IMR-90 (cell line): ENCODE measurements at regions of chr15 and their contacts with region 1.

Region 1: DNA sequence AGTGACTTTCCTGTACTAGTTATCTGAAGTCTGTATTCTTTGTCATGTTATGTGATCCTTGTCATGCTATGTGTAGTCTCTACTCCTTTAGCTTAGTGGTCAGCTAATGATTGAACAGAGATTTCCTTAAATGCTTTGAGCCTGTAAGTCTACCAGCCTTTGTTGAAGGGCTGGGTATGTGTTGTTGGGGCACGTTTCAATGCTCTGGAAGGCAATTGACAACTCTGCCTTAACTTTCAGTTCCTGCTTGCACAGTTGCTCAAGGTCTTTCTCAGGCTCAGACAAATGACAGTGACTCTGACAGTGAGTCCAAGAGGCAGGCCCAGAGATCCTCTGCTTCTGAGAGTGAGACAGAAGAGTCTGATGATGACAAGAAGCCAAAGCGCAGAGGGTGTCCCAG is 89.3 kb downstream of the CHD2 start:
- DNase-seq: no peak
- ATAC-seq: no peak
- H3K4me3 ChIP-seq: no peak overlapping the region
- H3K27ac ChIP-seq: no peak overlapping the region
- H3K4me1 ChIP-seq: no peaks in the 10 kb centered on the region
- H3K27me3 ChIP-seq: no peaks in the 10 kb centered on the region
- CTCF ChIP-seq: no peak
- POLR2A ChIP-seq: no peak
- RAD21 ChIP-seq: no peak

Region 2: DNA sequence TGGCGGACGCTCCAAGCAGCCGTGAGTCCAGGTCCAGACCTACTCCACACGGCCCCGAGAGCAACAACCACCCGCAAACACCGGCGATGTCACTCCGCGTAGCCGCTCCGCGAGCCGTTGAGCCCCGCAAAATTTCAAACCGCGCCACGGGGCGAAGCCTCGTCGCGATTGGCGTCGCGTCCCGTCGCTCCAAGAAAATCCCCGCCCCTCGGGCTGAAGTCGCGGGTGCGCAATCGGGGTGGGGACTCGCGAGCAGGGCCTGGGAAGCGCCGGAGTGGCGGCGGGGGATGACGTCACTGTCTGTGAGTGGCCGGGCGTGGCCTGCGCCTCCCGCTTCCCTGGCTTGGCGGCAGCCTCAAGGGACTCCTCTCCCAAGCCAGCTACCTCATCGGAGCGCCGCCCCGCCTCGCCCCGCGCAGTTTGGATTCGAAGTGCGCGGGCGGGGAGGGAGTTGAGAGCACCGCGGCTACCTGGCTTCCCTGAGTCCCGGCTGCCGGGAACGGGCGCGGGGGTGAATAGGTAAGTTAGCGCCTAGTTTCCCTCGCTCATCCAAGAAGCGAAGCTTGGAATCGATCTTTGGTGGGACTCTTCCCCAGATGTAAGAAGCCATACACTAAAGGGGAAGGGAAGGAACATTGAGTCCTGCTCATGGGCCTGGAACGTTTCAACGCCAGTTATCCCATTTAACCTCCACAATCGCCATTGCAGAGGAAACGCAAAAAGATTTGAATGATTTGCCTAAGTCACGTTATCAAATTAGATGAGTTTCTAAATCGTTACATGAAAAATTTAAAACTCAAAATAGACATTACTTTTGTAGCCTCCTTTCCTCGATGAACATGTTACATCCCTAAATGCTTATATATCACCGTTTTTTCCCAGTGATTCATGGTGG is 1994.8 kb before region 1 on chr15 and contains the start of gene PRC1:
- CTCF ChIA-PET with region 1: no interaction called
- POLR2A ChIA-PET with region 1: no interaction called
- dilution Hi-C with region 1: no loop called
- in situ Hi-C with region 1: loop called (anchors 25 kb)
- intact Hi-C with region 1: no loop called
- DNase-seq: peak; percentile 97
- ATAC-seq: peak; percentile 98
- H3K4me3 ChIP-seq: peak within 1 kb of the TSS; percentile 96
- H3K27ac ChIP-seq: peak within 1 kb of the TSS; percentile 72
- H3K4me1 ChIP-seq: no peaks in the 10 kb centered on the region
- H3K27me3 ChIP-seq: no peaks in the 10 kb centered on the region
- CTCF ChIP-seq: no peak
- POLR2A ChIP-seq: peak; percentile 83
- RAD21 ChIP-seq: no peak
- total RNA-seq, gene PRC1: 148 and 208 TPM in 2 replicates

Region 3: DNA sequence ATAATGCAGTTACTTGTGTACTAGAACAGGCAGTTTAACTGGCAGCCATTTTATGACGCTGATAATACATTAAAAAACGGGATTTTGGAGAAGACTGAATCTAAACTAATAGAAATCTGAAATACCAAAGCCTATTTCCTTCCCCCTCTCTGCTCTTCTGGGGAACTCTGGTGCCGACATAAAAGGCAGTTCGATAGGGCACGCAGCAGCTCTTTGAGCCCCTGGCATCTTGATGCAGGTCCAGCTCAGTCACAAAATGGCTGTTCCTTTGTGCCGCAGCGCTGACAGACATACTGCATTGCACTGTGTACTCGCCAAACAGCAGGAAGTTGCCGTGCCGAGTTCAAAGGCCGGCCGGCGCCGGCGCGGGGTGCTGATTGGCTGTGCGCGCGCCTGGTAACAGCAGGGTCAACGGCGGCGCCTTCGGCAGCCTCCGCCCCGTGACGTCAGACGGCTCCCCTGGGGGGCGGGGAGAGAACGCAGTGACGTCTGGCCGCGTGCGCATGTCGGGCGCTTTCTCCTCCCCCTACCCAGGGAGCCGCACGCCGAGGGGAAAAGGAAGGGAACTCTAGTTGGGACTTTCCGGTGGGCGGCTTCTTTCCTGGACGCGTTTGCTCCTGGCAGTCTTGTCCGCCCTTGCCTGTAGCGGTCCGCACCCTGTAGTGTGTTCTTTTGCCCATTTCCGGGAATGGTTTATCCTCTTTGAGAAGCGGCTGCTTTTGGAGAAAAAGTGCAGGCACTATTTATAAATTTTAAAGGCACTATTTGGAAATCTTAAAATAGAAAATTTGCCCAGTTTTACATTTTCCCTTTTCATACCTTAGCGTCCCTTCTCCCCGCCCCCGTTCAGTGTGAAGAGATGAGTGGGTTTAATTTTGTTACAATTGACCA is 85.3 kb before region 1 on chr15:
- CTCF ChIA-PET with region 1: no interaction called
- POLR2A ChIA-PET with region 1: no interaction called
- dilution Hi-C with region 1: no loop called
- in situ Hi-C with region 1: no loop called
- intact Hi-C with region 1: no loop called
- DNase-seq: peak; percentile 98
- ATAC-seq: peak; percentile 85
- H3K4me3 ChIP-seq: peak overlapping the region; percentile 54
- H3K27ac ChIP-seq: peak overlapping the region; percentile 98
- H3K4me1 ChIP-seq: peaks cover 11% of the 10 kb centered on the region
- H3K27me3 ChIP-seq: no peaks in the 10 kb centered on the region
- CTCF ChIP-seq: no peak
- POLR2A ChIP-seq: peak; percentile 98
- RAD21 ChIP-seq: no peak